ENCODE measurements at regions of chr19 and their contacts with region 1.

Region 1: DNA sequence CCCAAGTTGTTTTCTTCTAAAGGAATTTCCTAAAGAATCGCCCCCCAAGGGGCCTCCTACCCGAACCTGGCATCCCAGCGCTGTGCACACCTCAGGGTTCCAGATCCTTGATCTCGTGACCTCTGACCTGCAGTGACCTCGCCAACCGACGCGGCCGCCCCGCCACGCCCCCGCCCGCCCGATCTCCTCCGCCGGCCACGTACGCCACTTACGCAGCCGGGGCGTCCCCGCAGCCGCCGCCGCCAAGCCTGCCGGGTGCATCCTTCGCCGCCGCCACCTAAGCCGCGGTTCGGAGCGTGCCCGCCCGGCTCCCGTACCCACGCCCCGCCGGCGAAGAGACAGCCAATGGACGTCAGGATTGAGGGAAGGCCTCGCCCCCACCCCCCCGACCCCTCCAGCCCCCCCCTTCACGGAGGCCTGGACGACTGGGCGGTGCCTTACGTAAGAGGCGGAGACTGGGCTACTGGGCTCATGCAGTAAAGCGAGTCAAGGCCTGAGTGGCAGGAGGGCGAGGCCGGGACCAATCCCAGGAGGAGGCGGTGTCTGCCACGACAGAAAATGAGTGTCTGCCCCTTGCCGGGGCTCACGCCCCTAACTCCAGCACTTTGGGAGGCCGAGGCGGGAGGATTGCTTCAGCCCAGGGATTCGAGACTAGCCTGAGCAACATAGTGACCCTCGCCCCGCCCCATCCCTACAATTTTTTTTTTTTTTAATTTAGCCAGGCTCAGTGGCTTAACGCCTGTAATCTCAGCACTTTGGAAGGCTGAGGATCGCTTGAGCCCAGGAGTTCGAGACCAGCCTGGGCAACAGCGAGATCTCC is at the start of gene YIF1B:
- DNase-seq: peak; percentile 95
- H3K4me3 ChIP-seq: peak within 1 kb of the TSS; percentile 65 to 96 (median 95)
- H3K27ac ChIP-seq: peak within 1 kb of the TSS; percentile 59
- H3K4me1 ChIP-seq: peaks cover 39% of the 10 kb centered on the region
- H3K27me3 ChIP-seq: no peaks in the 10 kb centered on the region
- CTCF ChIP-seq: no peak
- POLR2A ChIP-seq: no peak
- total RNA-seq, gene YIF1B: 80.9 and 85.8 TPM in 2 replicates

Region 2: GRCh38 chr19:37896180-37896579 is 419.7 kb before region 1 on chr19:
- CTCF ChIA-PET with region 1: no interaction called
- POLR2A ChIA-PET with region 1: no interaction called
- dilution Hi-C with region 1: no loop called
- intact Hi-C with region 1: loop called (anchors 5 kb)
- DNase-seq: no peak
- H3K4me3 ChIP-seq: no peak overlapping the region
- H3K27ac ChIP-seq: no peak overlapping the region
- H3K4me1 ChIP-seq: no peaks in the 10 kb centered on the region
- H3K27me3 ChIP-seq: peaks cover 0 to 2% of the 10 kb centered on the region in 2 experiments
- CTCF ChIP-seq: no peak
- POLR2A ChIP-seq: no peak

Region 3: DNA sequence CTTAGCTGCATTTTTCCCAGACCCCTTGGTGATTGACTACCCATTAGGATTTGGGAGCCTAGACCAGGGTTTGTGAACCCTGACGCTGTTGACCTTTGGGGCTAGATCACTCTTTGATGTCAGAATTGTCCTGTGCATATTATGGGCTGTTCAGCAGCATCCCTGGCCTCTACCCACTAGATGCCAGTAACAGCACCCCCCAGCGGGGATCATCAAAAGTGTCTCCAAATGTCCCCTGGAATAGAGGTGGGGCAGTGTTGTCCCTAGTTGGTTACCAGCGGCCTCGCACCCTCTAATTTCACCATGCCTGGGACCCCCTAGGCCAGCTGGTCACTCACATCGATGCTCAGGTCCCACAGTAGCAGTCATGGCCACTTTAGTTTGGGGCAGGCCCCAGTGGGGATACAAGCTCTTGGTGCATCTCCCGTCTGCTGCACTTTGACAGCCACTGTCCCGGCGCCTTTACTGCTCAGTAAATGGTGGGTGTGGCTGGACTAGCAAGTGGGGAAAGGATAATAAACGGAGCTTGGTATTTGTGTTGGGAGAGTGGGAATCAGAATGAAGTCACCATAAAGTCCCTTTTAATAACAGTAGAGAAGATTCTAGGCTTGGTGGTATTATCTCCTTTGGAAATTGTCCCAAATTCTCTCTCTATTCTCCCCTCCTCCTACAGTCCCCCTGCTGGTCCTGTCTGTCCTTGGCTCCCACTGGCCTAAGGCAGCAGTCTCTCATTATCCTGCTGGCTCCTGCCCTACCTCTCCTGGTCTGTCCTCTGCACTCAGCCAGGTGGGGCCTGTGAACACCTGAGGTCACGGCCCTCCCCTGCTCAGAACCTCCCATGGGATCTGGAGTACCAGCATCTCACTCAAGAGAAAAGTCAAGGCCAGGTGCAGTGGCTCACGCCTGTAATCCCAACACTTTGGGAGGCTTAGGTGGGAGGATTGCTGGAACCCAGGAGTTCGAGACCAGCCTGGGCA is 328.2 kb before region 1 on chr19:
- CTCF ChIA-PET with region 1: no interaction called
- POLR2A ChIA-PET with region 1: no interaction called
- dilution Hi-C with region 1: no loop called
- intact Hi-C with region 1: no loop called
- DNase-seq: no peak
- H3K4me3 ChIP-seq: no peak overlapping the region
- H3K27ac ChIP-seq: no peak overlapping the region
- H3K4me1 ChIP-seq: no peaks in the 10 kb centered on the region
- H3K27me3 ChIP-seq: no peaks in the 10 kb centered on the region
- CTCF ChIP-seq: peak; percentile 9 to 17
- POLR2A ChIP-seq: no peak

Region 4: DNA sequence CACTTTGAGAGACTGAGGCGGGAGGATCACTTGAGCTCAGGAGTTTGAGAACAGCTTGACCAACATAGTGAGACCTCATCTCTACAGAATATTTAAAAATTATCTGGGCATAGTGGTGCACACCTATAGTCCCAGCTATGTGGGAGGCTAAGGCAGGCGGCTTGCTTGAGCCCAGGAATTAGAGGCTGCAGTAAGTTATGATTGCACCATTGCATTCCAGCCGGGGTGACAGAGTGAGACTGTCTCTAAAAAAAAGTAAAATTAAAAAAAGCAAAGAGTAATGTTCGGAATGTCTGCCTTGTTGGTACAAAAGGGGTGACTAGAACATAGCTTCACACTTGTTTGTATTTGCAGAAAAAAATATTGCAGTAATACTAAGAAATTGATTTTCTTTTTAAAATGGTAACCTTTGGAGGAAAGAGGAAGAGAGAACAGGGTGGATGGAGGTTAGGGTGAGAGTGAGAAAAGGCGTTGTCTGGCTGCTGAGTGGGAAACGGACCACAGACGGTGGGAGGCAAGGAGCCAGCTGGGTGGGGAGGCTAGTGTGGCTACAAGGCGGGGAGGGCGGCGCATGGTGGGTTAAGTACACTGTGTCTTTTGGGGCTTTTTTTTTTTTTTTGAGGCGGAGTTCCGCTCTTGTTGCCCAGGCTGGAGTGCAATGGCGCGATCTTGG is 69.9 kb before region 1 on chr19:
- CTCF ChIA-PET with region 1: interaction called, 14 read pairs
- POLR2A ChIA-PET with region 1: no interaction called
- dilution Hi-C with region 1: no loop called
- intact Hi-C with region 1: no loop called
- DNase-seq: no peak
- H3K4me3 ChIP-seq: no peak overlapping the region
- H3K27ac ChIP-seq: no peak overlapping the region
- H3K4me1 ChIP-seq: no peaks in the 10 kb centered on the region
- H3K27me3 ChIP-seq: no peaks in the 10 kb centered on the region
- CTCF ChIP-seq: no peak
- POLR2A ChIP-seq: no peak

Region 5: DNA sequence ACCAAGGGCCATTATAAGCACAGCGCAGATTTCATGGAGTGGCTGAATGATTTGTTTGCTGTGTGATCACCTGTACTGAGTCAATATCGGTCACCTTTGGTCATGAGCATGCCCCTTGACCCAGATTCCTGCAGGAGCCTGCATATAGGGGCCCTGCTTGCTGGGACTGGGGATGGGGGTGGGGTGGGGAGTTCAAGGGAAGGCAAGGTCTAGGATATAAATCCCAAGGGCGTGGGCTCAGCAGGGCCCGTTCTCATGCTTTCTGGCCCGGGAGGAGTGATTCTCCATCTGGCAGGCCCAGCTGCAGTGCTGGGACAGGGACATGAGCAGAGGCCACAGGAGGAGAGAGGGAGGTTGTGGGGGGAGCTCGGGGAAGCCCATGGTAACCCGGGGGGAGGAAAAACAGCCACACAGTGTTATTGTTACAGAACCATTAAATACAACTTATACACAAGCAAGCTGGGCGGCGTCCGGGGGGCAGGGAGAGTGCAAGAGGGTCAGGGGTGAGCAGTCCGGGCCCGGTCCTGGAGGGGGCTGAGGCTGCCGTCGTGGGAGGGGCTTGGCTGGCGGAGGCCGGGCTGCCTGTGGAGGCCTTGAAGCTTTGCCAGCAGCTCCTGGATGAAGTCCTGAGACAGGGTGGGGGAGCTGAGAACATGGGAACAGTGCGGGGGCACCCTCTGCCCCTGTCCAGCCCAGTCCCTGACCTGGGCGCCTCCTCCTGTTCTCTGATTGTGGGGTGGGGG is 64.9 kb before region 1 on chr19:
- CTCF ChIA-PET with region 1: interaction called, 7 read pairs
- POLR2A ChIA-PET with region 1: no interaction called
- dilution Hi-C with region 1: no loop called
- intact Hi-C with region 1: loop called (anchors 2 kb)
- DNase-seq: no peak
- H3K4me3 ChIP-seq: no peak overlapping the region
- H3K27ac ChIP-seq: no peak overlapping the region
- H3K4me1 ChIP-seq: peaks cover 9% of the 10 kb centered on the region
- H3K27me3 ChIP-seq: no peaks in the 10 kb centered on the region
- CTCF ChIP-seq: no peak
- POLR2A ChIP-seq: no peak

Region 6: DNA sequence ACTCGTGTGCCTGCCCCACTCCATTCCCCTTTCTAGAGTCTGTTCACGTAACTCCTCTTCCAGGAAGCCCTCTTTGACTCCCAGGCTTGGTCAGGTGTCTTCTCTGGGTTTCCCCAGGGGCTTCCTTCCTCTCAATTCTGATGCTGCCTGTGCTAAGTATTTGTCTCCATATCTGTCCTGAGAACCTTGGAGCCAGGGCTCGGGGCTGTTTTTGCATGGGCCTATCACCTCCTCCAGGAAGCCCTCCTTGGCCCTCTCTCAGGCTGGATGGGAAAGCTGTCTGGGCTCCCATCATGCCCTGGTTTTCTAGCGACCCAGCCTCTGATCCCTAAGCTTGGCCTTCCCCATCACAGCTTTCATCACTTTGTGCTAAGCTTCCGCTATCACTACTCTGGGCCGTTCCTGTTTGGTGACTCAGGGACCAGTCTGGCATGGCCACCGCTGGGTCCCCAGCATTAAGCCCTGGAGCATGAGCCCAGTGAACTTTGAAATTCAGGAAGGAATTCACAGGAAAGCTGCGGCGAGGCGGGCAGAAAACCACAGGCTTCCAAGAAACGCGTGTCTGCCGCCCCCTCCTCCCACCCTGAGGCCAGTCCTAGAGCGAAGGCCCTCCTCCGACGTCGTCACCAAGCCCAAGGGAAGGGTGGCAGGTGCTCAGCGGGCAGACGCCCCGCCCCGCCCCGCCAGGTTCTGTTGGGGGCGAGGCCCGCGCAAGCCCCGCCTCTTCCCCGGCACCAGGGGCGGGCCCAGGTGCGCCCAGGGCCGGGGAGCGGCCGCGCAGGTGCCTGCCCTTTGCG is 52.0 kb before region 1 on chr19:
- CTCF ChIA-PET with region 1: interaction called, 3 read pairs
- POLR2A ChIA-PET with region 1: no interaction called
- dilution Hi-C with region 1: no loop called
- intact Hi-C with region 1: loop called (anchors 2 kb)
- DNase-seq: no peak
- H3K4me3 ChIP-seq: peak overlapping the region; percentile 14 to 47 (median 34)
- H3K27ac ChIP-seq: no peak overlapping the region
- H3K4me1 ChIP-seq: peaks cover 20% of the 10 kb centered on the region
- H3K27me3 ChIP-seq: no peaks in the 10 kb centered on the region
- CTCF ChIP-seq: no peak
- POLR2A ChIP-seq: no peak

Region 7: GRCh38 chr19:38277969-38278680 is 37.7 kb before region 1 on chr19:
- CTCF ChIA-PET with region 1: no interaction called
- POLR2A ChIA-PET with region 1: no interaction called
- dilution Hi-C with region 1: no loop called
- intact Hi-C with region 1: loop called (anchors 1 kb)
- DNase-seq: peak; percentile 78
- H3K4me3 ChIP-seq: no peak overlapping the region
- H3K27ac ChIP-seq: peak overlapping the region; percentile 73
- H3K4me1 ChIP-seq: peaks cover 30% of the 10 kb centered on the region
- H3K27me3 ChIP-seq: no peaks in the 10 kb centered on the region
- CTCF ChIP-seq: no peak
- POLR2A ChIP-seq: no peak

Region 8: GRCh38 chr19:38304866-38305429 is 10.9 kb before region 1 on chr19:
- CTCF ChIA-PET with region 1: no interaction called
- POLR2A ChIA-PET with region 1: interaction called, 5 read pairs
- dilution Hi-C with region 1: no loop called
- intact Hi-C with region 1: loop called (anchors 1 kb)
- DNase-seq: peak; percentile 70
- H3K4me3 ChIP-seq: peak overlapping the region in 1 of 3 experiments; percentile 10
- H3K27ac ChIP-seq: no peak overlapping the region
- H3K4me1 ChIP-seq: peaks cover 16% of the 10 kb centered on the region
- H3K27me3 ChIP-seq: no peaks in the 10 kb centered on the region
- CTCF ChIP-seq: no peak
- POLR2A ChIP-seq: peak; percentile 46

Region 9: DNA sequence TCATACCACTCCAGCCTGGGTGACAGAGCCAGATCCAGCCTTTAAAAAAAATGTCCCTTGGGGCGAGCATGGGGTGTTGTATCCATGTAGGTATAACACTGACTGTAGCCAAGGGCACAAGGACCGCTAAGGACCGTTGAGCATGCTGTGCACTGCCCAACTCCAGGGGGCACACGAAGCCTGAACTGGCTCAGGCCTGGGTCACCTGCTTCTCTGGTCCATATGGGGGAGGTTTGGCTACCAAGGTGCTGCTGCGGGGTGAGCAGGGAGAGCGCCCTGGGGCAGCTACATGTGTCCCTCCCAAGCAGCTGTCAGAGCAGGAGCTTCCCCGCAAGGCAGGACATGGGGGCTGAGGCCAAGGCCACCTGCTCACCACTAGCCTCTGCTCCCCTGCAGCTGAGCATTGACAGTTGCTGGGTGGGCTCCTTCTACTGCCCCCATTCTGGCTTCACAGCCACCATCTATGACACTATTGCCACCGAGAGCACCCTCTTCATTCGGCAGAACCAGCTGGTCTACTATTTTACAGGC is 36.1 kb after region 1 on chr19:
- CTCF ChIA-PET with region 1: no interaction called
- POLR2A ChIA-PET with region 1: no interaction called
- dilution Hi-C with region 1: no loop called
- intact Hi-C with region 1: no loop called
- DNase-seq: no peak
- H3K4me3 ChIP-seq: no peak overlapping the region
- H3K27ac ChIP-seq: no peak overlapping the region
- H3K4me1 ChIP-seq: no peaks in the 10 kb centered on the region
- H3K27me3 ChIP-seq: peaks cover 2 to 4% of the 10 kb centered on the region in 2 experiments
- CTCF ChIP-seq: no peak
- POLR2A ChIP-seq: no peak

Measured in endothelial cell of umbilical vein (primary cell).